Heart right ventricle (tissue), 16 donors: ENCODE measurements at regions of chr5 and their contacts with region 1.

Region 1: DNA sequence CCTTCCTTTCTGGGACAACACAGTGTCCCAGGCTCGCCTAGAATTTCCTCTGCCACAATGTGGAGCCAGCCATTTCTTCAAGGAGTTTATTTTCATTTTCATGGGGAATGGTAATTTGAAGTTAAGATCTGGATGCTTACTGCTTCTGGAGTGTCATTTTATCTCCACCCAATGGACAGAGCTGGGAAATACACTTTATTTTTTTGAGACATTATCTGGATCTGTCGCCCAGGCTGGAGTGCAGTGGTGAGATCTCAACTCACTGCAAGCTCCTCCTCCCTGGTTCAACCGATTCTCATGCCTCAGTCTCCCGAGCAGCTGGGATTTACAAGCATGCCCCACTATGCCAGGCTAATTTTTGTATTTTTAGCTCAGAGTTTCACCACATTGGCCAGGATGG is 12.7 kb upstream of the THG1L start:
- DNase-seq: peak in 1 of 2 donors; percentile 23
- ATAC-seq: peak; percentile 72 to 94 (median 88)
- H3K4me3 ChIP-seq: no peak overlapping the region
- H3K27ac ChIP-seq: peak overlapping the region in 3 of 10 donors; percentile 7 to 44 (median 13)
- H3K4me1 ChIP-seq: peaks cover 0 to 13% (median 9%) of the 10 kb centered on the region in 9 donors
- H3K27me3 ChIP-seq: no peaks in the 10 kb centered on the region
- CTCF ChIP-seq: peak; percentile 34 to 83 (median 68)

Region 2: DNA sequence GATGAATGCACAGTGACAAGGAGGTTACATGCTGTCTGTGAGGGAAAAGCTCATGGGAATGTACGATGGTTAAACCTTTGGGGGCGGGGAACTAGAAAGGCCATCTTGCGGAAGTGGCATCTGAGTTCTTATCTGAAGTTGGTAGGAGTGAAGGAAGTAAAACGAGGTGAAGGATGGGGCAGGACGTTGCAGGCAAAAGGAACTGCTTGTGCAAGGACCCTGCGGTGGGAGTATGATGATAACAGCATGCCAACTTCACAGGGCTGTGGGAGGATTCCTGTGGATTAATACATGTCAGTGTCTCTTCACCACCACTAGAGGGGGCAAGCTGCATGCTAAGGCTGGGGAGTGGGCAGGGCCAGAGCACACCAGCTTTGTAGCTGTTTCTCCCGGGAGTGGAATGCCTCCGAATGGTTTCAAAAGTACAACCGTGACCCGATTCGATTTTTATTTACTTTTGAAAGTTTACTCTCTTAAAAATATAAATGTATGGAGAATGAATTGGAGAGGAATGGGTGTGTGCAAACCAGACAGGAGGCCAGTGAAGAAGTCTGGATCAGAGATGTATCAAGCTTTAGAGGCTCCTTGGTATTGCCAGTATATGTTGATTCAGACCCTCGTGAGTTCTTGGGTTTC is 390.1 kb before region 1 on chr5:
- intact Hi-C with region 1: loop called in 8 of 10 experiments (anchors 5 to 10 kb)
- DNase-seq: peak; percentile 32 to 61
- ATAC-seq: peak; percentile 89 to 96 (median 94)
- H3K4me3 ChIP-seq: peak overlapping the region in 6 of 10 donors; percentile 8 to 37 (median 22)
- H3K27ac ChIP-seq: peak overlapping the region in 1 of 10 donors; percentile 36
- H3K4me1 ChIP-seq: peaks cover 0 to 11% (median 0%) of the 10 kb centered on the region in 9 donors
- H3K27me3 ChIP-seq: no peaks in the 10 kb centered on the region
- CTCF ChIP-seq: peak; percentile 87 to 95 (median 93)

Region 3: GRCh38 chr5:157335534-157336422 is 382.7 kb before region 1 on chr5:
- intact Hi-C with region 1: loop called in 2 of 10 experiments (anchors 5 to 10 kb)
- DNase-seq: no peak
- ATAC-seq: peak in 4 of 8 donors; percentile 26 to 76 (median 51)
- H3K4me3 ChIP-seq: no peak overlapping the region
- H3K27ac ChIP-seq: peak overlapping the region in 1 of 10 donors; percentile 26
- H3K4me1 ChIP-seq: peaks cover 0 to 9% (median 0%) of the 10 kb centered on the region in 9 donors
- H3K27me3 ChIP-seq: no peaks in the 10 kb centered on the region
- CTCF ChIP-seq: no peak

Region 4: DNA sequence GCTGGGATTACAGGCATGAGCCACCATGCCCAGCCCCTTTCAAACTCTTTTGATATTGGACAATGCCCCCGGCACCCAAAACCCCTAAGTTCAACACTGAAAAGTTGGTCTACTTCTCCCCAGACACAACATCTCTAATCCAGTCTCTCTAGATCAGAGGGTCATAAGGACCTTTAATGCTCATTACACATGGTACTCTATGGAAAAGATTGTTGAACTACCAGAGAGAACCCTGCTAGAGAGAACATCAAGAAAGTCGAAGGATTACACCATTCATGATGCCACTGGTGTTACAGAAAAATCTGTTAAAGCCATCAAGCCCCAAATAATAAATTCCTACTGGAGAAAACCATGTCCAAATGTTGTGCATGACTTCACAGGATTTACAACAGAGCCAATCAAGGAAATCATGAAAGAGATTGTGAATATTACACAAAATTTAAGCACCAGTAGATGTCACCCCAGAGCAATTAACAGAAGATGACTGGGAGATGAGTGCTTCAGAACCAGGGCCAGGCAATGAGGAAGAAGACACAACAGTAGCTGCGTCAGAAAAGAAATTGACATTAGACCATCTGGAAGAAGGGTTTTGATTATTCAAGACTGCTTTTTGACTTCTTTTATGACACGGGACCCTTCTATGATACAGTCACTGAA is 286.8 kb before region 1 on chr5:
- intact Hi-C with region 1: loop called (anchors 1 to 5 kb)
- DNase-seq: peak in 1 of 2 donors; percentile 45
- ATAC-seq: peak in 7 of 8 donors; percentile 70 to 88 (median 82)
- H3K4me3 ChIP-seq: no peak overlapping the region
- H3K27ac ChIP-seq: no peak overlapping the region
- H3K4me1 ChIP-seq: peaks cover 0 to 6% (median 0%) of the 10 kb centered on the region in 9 donors
- H3K27me3 ChIP-seq: no peaks in the 10 kb centered on the region
- CTCF ChIP-seq: peak; percentile 33 to 74 (median 60)

Region 5: DNA sequence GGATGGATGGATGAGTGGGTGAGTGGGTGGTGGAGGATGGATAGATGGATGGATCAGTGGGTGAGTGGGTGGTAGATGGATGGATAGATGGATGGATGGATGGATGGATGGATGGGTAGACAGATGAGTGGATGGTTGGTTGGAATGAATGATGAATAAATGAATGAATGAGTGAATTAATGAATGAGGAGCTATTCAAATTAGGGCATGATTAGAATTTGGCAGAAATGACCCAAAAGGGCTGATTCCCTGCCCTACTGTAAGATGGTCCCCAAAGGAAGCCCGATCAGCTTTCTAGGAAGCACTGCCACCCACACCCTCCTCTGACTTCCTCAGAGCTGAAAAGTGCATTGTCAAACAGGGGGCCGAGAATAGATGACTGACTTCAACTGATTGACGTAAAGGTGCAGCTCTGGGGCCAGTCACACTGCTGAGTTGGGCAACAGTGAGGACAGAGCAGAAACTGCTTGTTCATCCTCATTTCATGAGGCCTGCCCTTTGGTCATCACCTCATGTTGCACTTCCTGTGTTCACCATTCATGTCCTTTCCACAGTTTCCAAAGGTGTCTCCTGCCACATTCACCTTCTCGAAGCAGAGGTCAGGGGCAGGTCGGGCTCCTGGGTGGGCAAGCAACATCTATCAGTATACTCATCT is 224.2 kb before region 1 on chr5:
- intact Hi-C with region 1: loop called in 1 of 10 experiments (anchors 10 kb)
- DNase-seq: no peak
- ATAC-seq: peak in 4 of 8 donors; percentile 40 to 61 (median 52)
- H3K4me3 ChIP-seq: no peak overlapping the region
- H3K27ac ChIP-seq: peak overlapping the region in 1 of 10 donors; percentile 35
- H3K4me1 ChIP-seq: peaks cover 0 to 9% (median 0%) of the 10 kb centered on the region in 9 donors
- H3K27me3 ChIP-seq: no peaks in the 10 kb centered on the region
- CTCF ChIP-seq: no peak

Region 6: GRCh38 chr5:157502143-157502647 is 216.3 kb before region 1 on chr5:
- intact Hi-C with region 1: loop called in 2 of 10 experiments (anchors 10 kb)
- DNase-seq: no peak
- ATAC-seq: peak in 3 of 8 donors; percentile 22 to 53 (median 53)
- H3K4me3 ChIP-seq: no peak overlapping the region
- H3K27ac ChIP-seq: peak overlapping the region in 1 of 10 donors; percentile 4
- H3K4me1 ChIP-seq: peaks cover 0 to 36% (median 9%) of the 10 kb centered on the region in 9 donors
- H3K27me3 ChIP-seq: no peaks in the 10 kb centered on the region
- CTCF ChIP-seq: no peak

Region 7: GRCh38 chr5:157670662-157671591 is 47.6 kb before region 1 on chr5 and contains the start of gene C5orf52:
- intact Hi-C with region 1: loop called in 3 of 10 experiments (anchors 2 to 5 kb)
- DNase-seq: peak; percentile 21 to 45
- ATAC-seq: peak; percentile 66 to 86 (median 74)
- H3K4me3 ChIP-seq: peak within 1 kb of the TSS; percentile 33 to 76 (median 62)
- H3K27ac ChIP-seq: peak within 1 kb of the TSS in 1 of 10 donors; percentile 53
- H3K4me1 ChIP-seq: peaks cover 0 to 17% (median 13%) of the 10 kb centered on the region in 9 donors
- H3K27me3 ChIP-seq: peaks cover 0 to 37% (median 7%) of the 10 kb centered on the region in 7 donors
- CTCF ChIP-seq: no peak
- total RNA-seq, gene C5orf52: not detected